MCF 10A (cell line): ENCODE measurements at regions of chr9 and their contacts with region 1.

Region 1: GRCh38 chr9:33076358-33077004 is at the start of gene SMU1:
- DNase-seq: peak; percentile 98
- H3K4me3 Mint-ChIP-seq: peak within 1 kb of the TSS; percentile 86
- H3K27ac Mint-ChIP-seq: peak within 1 kb of the TSS; percentile 99
- H3K4me1 Mint-ChIP-seq: peaks cover 14% of the 10 kb centered on the region
- H3K27me3 Mint-ChIP-seq: no peaks in the 10 kb centered on the region
- CTCF ChIP-seq: no peak
- total RNA-seq, gene SMU1: 17.2 and 19.3 TPM in 2 replicates

Region 2: GRCh38 chr9:33044127-33044673 is 32.3 kb before region 1 on chr9:
- CTCF ChIA-PET with region 1: interaction called, 4 read pairs
- POLR2A ChIA-PET with region 1: interaction called, 14 read pairs
- intact Hi-C with region 1: no loop called
- DNase-seq: peak; percentile 88
- H3K4me3 Mint-ChIP-seq: peak overlapping the region; percentile 72
- H3K27ac Mint-ChIP-seq: peak overlapping the region; percentile 64
- H3K4me1 Mint-ChIP-seq: peaks cover 22% of the 10 kb centered on the region
- H3K27me3 Mint-ChIP-seq: no peaks in the 10 kb centered on the region
- CTCF ChIP-seq: no peak

Region 3: GRCh38 chr9:33130508-33130911 is 54.0 kb after region 1 on chr9:
- CTCF ChIA-PET with region 1: no interaction called
- POLR2A ChIA-PET with region 1: interaction called, 4 read pairs
- intact Hi-C with region 1: loop called (anchors 1 kb)
- DNase-seq: peak; percentile 75
- H3K4me3 Mint-ChIP-seq: peak overlapping the region; percentile 22
- H3K27ac Mint-ChIP-seq: peak overlapping the region; percentile 96
- H3K4me1 Mint-ChIP-seq: peaks cover 60% of the 10 kb centered on the region
- H3K27me3 Mint-ChIP-seq: no peaks in the 10 kb centered on the region
- CTCF ChIP-seq: no peak

Region 4: GRCh38 chr9:33167046-33167808 is 90.7 kb after region 1 on chr9 and contains the start of gene B4GALT1:
- CTCF ChIA-PET with region 1: interaction called, 4 read pairs
- POLR2A ChIA-PET with region 1: interaction called, 90 read pairs
- intact Hi-C with region 1: loop called (anchors 1 kb)
- DNase-seq: peak; percentile 96
- H3K4me3 Mint-ChIP-seq: peak within 1 kb of the TSS; percentile 96
- H3K27ac Mint-ChIP-seq: peak within 1 kb of the TSS; percentile 89
- H3K4me1 Mint-ChIP-seq: peaks cover 52% of the 10 kb centered on the region
- H3K27me3 Mint-ChIP-seq: no peaks in the 10 kb centered on the region
- CTCF ChIP-seq: no peak
- total RNA-seq, gene B4GALT1: 155 and 184 TPM in 2 replicates

Region 5: GRCh38 chr9:33233681-33234473 is 157.4 kb after region 1 on chr9:
- CTCF ChIA-PET with region 1: interaction called, 6 read pairs
- POLR2A ChIA-PET with region 1: interaction called, 29 read pairs
- intact Hi-C with region 1: no loop called
- DNase-seq: peak; percentile 100
- H3K4me3 Mint-ChIP-seq: peak overlapping the region; percentile 2
- H3K27ac Mint-ChIP-seq: peak overlapping the region; percentile 97
- H3K4me1 Mint-ChIP-seq: peaks cover 71% of the 10 kb centered on the region
- H3K27me3 Mint-ChIP-seq: no peaks in the 10 kb centered on the region
- CTCF ChIP-seq: no peak